ENCODE measurements at regions of chr3 and their contacts with region 1.

Region 1: DNA sequence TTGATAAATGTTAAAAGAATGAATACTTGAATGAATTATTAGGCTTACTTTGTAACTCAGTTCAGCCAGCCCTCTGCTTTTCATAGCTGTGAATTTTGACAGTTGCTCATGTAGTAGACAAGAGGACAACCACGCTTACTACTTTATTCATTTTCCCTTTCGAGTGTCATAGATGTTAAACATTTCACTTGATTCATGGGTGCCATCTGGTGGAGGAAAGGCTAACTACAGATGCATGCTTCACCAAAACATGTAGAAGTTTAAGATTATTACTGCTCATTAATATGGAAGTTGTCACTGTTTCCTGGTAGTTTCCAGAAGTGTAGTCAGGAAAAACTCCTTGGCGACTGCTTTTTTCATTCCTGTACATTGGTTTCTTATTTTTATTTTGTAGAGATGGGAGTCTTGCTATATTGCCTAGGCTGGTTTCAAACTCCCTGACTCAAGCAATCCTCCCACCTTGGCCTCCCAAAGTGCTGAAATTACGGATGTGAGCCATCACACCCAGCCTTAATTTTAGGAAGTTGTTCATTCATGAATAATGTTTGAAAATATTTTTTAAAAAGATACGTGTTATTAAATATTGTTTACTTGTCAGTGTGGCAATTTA is 163.2 kb downstream of the B3GALNT1 start:
- DNase-seq: peak; percentile 70
- H3K4me3 Mint-ChIP-seq: no peak overlapping the region
- H3K27ac Mint-ChIP-seq: no peak overlapping the region
- H3K4me1 Mint-ChIP-seq: no peaks in the 10 kb centered on the region
- H3K27me3 Mint-ChIP-seq: no peaks in the 10 kb centered on the region

Region 2: GRCh38 chr3:160707187-160707794 is 234.7 kb before region 1 on chr3:
- CTCF ChIA-PET with region 1: interaction called, 18 read pairs
- POLR2A ChIA-PET with region 1: interaction called, 3 read pairs
- DNase-seq: no peak
- H3K4me3 Mint-ChIP-seq: no peak overlapping the region
- H3K27ac Mint-ChIP-seq: no peak overlapping the region
- H3K4me1 Mint-ChIP-seq: no peaks in the 10 kb centered on the region
- H3K27me3 Mint-ChIP-seq: peaks cover 39% of the 10 kb centered on the region

Region 3: GRCh38 chr3:160911411-160911810 is 30.6 kb before region 1 on chr3:
- CTCF ChIA-PET with region 1: no interaction called
- POLR2A ChIA-PET with region 1: no interaction called
- DNase-seq: no peak
- H3K4me3 Mint-ChIP-seq: no peak overlapping the region
- H3K27ac Mint-ChIP-seq: no peak overlapping the region
- H3K4me1 Mint-ChIP-seq: no peaks in the 10 kb centered on the region
- H3K27me3 Mint-ChIP-seq: no peaks in the 10 kb centered on the region

Region 4: DNA sequence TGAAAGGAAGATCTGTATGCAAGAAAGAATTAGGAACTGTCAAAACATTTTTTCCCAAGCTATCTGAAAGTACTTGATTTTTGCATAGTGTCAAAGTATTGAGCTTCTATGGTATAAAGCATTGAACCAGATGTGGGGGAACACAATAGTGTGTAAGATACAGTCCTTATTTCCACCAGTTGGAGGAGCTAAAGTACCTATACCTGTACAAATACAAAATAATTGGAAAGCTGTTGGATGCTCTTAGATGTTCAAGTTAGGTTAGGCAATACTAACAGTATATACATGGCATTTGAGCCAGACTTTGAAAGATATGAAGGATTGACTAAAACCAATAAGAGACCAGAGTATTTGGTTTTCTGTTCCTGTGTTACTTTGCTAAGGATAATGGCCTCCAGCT is 14.8 kb after region 1 on chr3:
- CTCF ChIA-PET with region 1: no interaction called
- POLR2A ChIA-PET with region 1: no interaction called
- DNase-seq: no peak
- H3K4me3 Mint-ChIP-seq: no peak overlapping the region
- H3K27ac Mint-ChIP-seq: no peak overlapping the region
- H3K4me1 Mint-ChIP-seq: no peaks in the 10 kb centered on the region
- H3K27me3 Mint-ChIP-seq: peaks cover 11% of the 10 kb centered on the region